Breast epithelium (tissue), 4 donors: ENCODE measurements at regions of chr7 and their contacts with region 1.

Region 1: DNA sequence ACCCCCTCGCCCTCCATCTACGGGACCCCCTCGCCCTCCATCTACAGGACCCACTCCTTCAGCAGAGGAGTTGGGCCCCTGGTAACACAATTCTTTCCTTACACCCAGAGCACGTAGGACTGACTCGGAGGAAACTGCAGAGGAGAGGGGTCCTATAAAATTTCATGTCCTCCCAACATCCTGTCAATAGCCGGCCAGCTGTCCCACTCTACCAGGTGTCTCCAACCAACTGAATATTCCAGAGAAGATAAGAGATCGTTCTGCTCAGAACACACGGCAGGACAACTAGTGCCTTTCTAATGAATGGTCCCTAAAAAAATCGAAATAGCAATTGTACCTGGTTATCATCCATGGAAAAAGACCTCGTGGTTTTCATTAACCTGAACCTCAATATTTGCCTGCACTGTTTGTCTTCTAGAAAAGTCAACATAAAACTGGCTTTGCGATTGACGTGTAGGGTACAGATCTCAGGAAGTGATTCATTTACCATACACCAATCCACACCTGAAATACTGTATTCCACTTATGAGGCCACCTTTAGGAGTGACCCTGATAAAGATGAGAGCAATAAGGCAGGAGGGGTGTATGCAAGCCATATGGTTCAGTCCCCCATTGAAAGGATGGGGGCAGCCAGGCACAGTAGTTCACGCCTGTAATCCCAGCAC is 111.8 kb downstream of the PARP12 start:
- DNase-seq: no peak
- H3K4me3 ChIP-seq: no peak overlapping the region
- H3K27ac ChIP-seq: no peak overlapping the region
- H3K4me1 ChIP-seq: no peaks in the 10 kb centered on the region
- H3K27me3 ChIP-seq: no peaks in the 10 kb centered on the region
- CTCF ChIP-seq: no peak
- POLR2A ChIP-seq: no peak

Region 2: GRCh38 chr7:139995017-139995931 is 44.3 kb after region 1 on chr7:
- intact Hi-C with region 1: loop called (anchors 1 kb)
- DNase-seq: no peak
- H3K4me3 ChIP-seq: no peak overlapping the region
- H3K27ac ChIP-seq: no peak overlapping the region
- H3K4me1 ChIP-seq: no peaks in the 10 kb centered on the region
- H3K27me3 ChIP-seq: no peaks in the 10 kb centered on the region
- CTCF ChIP-seq: no peak
- POLR2A ChIP-seq: no peak

Region 3: DNA sequence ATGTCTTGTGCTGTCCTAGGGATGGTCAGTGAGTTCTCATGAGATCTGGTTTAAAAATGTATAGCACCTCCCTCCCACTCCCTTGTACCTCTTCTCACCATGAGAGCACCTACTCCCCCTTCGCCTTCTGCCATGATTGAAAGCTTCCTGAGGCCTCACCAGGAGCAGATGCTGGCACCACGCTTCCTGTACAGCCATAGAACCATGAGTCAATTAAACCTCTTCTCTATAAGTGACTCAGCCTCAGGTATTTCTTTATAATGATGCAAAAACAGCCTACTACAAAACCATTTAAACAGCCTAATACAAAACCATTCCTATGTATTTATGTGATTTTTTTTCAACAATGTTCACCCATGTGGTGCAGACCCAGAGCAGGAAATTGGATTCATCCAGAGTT is 193.8 kb after region 1 on chr7:
- intact Hi-C with region 1: loop called (anchors 5 kb)
- DNase-seq: no peak
- H3K4me3 ChIP-seq: no peak overlapping the region
- H3K27ac ChIP-seq: no peak overlapping the region
- H3K4me1 ChIP-seq: no peaks in the 10 kb centered on the region
- H3K27me3 ChIP-seq: no peaks in the 10 kb centered on the region
- CTCF ChIP-seq: no peak
- POLR2A ChIP-seq: no peak